Endothelial cell of umbilical vein (primary cell): ENCODE measurements at regions of chr1 and their contacts with region 1.

Region 1: DNA sequence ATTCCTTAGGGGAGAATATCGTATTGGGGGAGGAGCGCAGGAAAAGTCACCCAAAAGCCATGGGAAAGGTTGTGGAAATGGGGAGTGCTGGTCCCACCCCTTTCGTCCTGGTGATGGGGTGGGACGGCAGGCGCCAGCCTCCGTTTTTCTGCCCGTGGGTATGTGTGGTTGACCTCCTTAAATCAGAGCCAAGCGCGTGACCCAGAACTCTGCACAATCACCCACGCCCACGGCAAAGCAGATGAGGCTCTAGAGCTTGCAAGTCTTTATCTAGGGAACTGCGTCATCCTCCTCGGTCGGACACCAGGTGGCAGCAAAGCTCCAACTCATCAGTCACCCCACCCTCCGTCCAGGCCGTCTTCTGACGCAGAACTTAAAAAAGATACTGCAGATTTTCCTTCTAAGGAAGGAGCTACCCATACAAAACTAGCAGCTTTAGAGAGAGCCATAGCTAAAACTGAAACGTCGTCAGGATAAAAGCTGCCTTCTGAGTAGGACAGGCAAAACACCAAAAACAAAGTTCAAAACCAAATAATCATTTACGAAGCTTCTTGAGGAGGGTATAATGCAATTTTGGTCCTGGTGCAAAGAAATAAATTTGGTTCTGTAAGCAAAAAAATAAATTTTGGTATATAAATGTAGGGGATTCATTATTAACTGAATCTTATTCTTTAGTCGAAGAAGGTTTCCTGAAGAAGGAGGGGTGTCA is 62.0 kb downstream of the TBX19 start:
- DNase-seq: peak; percentile 81
- H3K4me3 ChIP-seq: no peak overlapping the region
- H3K27ac ChIP-seq: no peak overlapping the region
- H3K4me1 ChIP-seq: peaks cover 5% of the 10 kb centered on the region
- H3K27me3 ChIP-seq: peaks cover 4 to 16% of the 10 kb centered on the region in 2 experiments
- CTCF ChIP-seq: peak; percentile 62 to 86
- POLR2A ChIP-seq: no peak

Region 2: GRCh38 chr1:168225476-168226190 is 117.1 kb before region 1 on chr1 and contains the start of gene SFT2D2:
- CTCF ChIA-PET with region 1: interaction called, 17 read pairs
- POLR2A ChIA-PET with region 1: no interaction called
- dilution Hi-C with region 1: no loop called
- intact Hi-C with region 1: no loop called
- DNase-seq: peak; percentile 78
- H3K4me3 ChIP-seq: peak within 1 kb of the TSS; percentile 63 to 88 (median 65)
- H3K27ac ChIP-seq: peak within 1 kb of the TSS; percentile 83
- H3K4me1 ChIP-seq: peaks cover 23% of the 10 kb centered on the region
- H3K27me3 ChIP-seq: peaks cover 6 to 7% of the 10 kb centered on the region in 2 experiments
- CTCF ChIP-seq: no peak
- POLR2A ChIP-seq: peak; percentile 47
- total RNA-seq, gene SFT2D2: 63.8 and 68.1 TPM in 2 replicates

Region 3: GRCh38 chr1:168261390-168261789 is 81.3 kb before region 1 on chr1:
- CTCF ChIA-PET with region 1: interaction called, 15 read pairs
- POLR2A ChIA-PET with region 1: no interaction called
- dilution Hi-C with region 1: no loop called
- intact Hi-C with region 1: no loop called
- DNase-seq: peak; percentile 90
- H3K4me3 ChIP-seq: peak overlapping the region in 1 of 3 experiments; percentile 39
- H3K27ac ChIP-seq: peak overlapping the region; percentile 84
- H3K4me1 ChIP-seq: peaks cover 28% of the 10 kb centered on the region
- H3K27me3 ChIP-seq: no peaks in the 10 kb centered on the region
- CTCF ChIP-seq: no peak
- POLR2A ChIP-seq: no peak

Region 4: GRCh38 chr1:168321945-168322344 is 20.8 kb before region 1 on chr1:
- CTCF ChIA-PET with region 1: interaction called, 13 read pairs
- POLR2A ChIA-PET with region 1: no interaction called
- dilution Hi-C with region 1: no loop called
- intact Hi-C with region 1: no loop called
- DNase-seq: peak; percentile 56
- H3K4me3 ChIP-seq: no peak overlapping the region
- H3K27ac ChIP-seq: no peak overlapping the region
- H3K4me1 ChIP-seq: peaks cover 18% of the 10 kb centered on the region
- H3K27me3 ChIP-seq: no peaks in the 10 kb centered on the region
- CTCF ChIP-seq: peak; percentile 4 to 40
- POLR2A ChIP-seq: no peak

Region 5: GRCh38 chr1:168365719-168366479 is 23.2 kb after region 1 on chr1:
- CTCF ChIA-PET with region 1: interaction called, 28 read pairs
- POLR2A ChIA-PET with region 1: no interaction called
- dilution Hi-C with region 1: no loop called
- intact Hi-C with region 1: no loop called
- DNase-seq: no peak
- H3K4me3 ChIP-seq: no peak overlapping the region
- H3K27ac ChIP-seq: no peak overlapping the region
- H3K4me1 ChIP-seq: no peaks in the 10 kb centered on the region
- H3K27me3 ChIP-seq: no peaks in the 10 kb centered on the region
- CTCF ChIP-seq: no peak
- POLR2A ChIP-seq: no peak

Region 6: GRCh38 chr1:168427051-168427450 is 84.3 kb after region 1 on chr1:
- CTCF ChIA-PET with region 1: no interaction called
- POLR2A ChIA-PET with region 1: no interaction called
- dilution Hi-C with region 1: no loop called
- intact Hi-C with region 1: no loop called
- DNase-seq: no peak
- H3K4me3 ChIP-seq: no peak overlapping the region
- H3K27ac ChIP-seq: no peak overlapping the region
- H3K4me1 ChIP-seq: no peaks in the 10 kb centered on the region
- H3K27me3 ChIP-seq: no peaks in the 10 kb centered on the region
- CTCF ChIP-seq: no peak
- POLR2A ChIP-seq: no peak

Region 7: DNA sequence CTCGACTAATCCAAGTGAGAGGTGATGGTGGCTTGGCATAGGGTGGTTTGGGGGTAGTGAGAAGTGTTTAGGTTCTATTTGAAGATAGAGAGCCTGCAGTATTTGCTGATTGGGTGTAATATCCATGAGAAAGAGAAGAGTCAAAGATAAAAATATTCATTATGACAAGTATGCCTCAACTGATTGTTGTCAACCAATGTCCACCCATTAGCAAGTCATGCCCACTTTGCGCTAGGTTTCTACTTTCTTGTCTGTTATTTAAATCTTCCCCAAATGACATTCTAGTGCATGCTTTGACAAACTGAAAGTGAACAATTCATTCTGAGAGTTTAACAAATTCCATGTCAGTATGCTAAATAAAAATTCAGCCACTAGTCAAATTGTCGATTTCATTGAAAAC is 229.9 kb after region 1 on chr1:
- CTCF ChIA-PET with region 1: interaction called, 16 read pairs
- POLR2A ChIA-PET with region 1: no interaction called
- dilution Hi-C with region 1: no loop called
- intact Hi-C with region 1: loop called (anchors 1 kb)
- DNase-seq: no peak
- H3K4me3 ChIP-seq: no peak overlapping the region
- H3K27ac ChIP-seq: no peak overlapping the region
- H3K4me1 ChIP-seq: no peaks in the 10 kb centered on the region
- H3K27me3 ChIP-seq: no peaks in the 10 kb centered on the region
- CTCF ChIP-seq: no peak
- POLR2A ChIP-seq: no peak

Region 8: DNA sequence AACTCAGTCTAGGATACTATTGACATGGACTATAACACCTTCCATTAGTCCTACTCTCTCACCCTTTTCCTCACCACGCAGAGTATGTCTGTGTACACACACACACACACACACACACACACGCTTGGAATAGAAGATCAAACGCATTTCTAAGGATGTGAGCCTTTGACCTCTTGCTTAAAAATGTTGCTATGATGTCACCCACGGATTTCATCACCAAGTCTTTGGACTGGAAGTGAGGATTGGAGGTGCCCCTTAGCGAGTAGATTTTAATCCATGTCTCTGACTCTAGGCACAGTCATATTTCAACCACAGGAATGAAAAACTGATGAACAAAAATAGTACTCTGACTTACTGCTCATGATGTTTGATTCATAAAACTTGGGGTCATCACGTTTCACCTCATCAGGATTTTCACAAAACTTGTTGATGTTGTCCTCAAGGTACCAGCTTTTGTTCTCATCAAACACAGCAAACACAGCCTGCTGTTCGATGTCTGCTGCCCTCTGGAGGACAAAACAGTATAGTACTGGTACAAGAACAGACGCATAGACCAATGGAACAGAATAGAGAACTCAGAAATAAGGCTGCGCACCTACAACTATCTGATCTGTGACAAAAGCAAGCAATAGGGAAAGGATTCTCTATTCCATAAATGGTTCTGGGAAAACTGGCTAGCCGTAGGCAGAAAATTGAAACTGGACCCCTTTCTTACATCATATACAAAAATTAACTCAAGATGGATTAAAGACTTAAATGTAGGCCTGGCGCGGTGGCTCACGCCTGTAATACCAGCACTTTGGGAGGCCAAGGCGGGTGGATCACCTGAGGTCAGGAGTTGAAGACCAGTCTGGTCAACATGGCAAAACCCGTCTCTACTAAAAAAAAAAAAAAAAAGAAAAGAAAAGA is 1203.6 kb after region 1 on chr1:
- CTCF ChIA-PET with region 1: interaction called, 12 read pairs
- POLR2A ChIA-PET with region 1: no interaction called
- dilution Hi-C with region 1: no loop called
- intact Hi-C with region 1: loop called (anchors 1 kb)
- DNase-seq: peak; percentile 66
- H3K4me3 ChIP-seq: no peak overlapping the region
- H3K27ac ChIP-seq: no peak overlapping the region
- H3K4me1 ChIP-seq: no peaks in the 10 kb centered on the region
- H3K27me3 ChIP-seq: peaks cover 0 to 2% of the 10 kb centered on the region in 2 experiments
- CTCF ChIP-seq: peak; percentile 63 to 66
- POLR2A ChIP-seq: no peak